ENCODE measurements at regions of chr5 and their contacts with region 1.

Region 1: DNA sequence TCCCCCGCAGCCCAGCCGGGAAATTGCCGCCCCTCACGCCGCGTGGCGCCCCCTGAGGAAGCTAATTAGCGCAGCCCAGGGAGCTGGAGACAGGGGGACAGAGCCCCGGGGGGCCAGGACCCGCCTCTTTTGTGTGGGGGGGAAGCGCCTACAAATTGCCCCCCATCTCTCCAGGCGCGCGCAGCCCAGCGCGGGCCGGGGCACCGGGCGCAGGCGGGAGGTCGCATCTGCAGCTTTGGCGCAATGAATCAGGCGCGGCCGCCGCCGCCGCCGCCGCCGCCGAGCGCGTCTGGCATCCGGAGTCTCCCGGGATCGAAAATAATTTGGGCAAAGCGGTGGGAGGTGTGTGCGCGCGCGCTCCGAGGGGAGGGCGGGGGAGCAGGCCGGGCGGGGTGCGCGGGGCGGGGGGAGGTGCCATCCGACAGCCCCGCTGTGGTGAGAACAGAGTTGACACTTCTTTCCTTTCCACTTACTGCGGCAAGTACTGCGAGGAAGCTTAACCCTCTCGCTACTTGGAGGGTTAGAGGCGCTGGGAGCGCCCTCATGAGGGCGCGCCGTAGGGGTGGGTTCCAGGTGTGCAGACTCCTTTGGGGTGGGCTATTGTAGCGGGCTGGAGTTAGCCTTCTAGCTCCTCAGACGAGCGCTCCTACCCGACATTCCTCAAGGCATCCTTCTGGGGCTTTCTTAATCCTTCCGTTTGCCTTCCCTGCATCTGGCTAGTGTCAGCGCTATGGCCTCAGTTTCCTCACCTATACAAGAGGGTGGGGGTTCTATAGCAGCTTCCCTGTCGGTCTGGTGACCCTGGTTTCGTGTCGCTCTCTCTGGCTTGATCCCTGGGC is 63.1 kb downstream of the CXXC5 start:
- DNase-seq: peak; percentile 79 to 91 (median 86)
- H3K4me3 ChIP-seq: peak overlapping the region; percentile 32 to 82 (median 63)
- H3K27ac ChIP-seq: peak overlapping the region; percentile 61 to 79
- H3K4me1 ChIP-seq: peaks cover 0 to 54% (median 39%) of the 10 kb centered on the region in 4 experiments
- H3K27me3 ChIP-seq: no peaks in the 10 kb centered on the region

Region 2: GRCh38 chr5:139651853-139652787 is 59.2 kb before region 1 on chr5:
- CTCF ChIA-PET with region 1: interaction called, 10 read pairs
- POLR2A ChIA-PET with region 1: interaction called, 7 read pairs
- DNase-seq: peak in 2 of 3 donors; percentile 72 to 78
- H3K4me3 ChIP-seq: peak overlapping the region in 6 of 7 experiments; percentile 27 to 95 (median 49)
- H3K27ac ChIP-seq: peak overlapping the region in 1 of 2 experiments; percentile 65
- H3K4me1 ChIP-seq: peaks cover 15 to 74% (median 71%) of the 10 kb centered on the region in 4 experiments
- H3K27me3 ChIP-seq: no peaks in the 10 kb centered on the region

Region 3: DNA sequence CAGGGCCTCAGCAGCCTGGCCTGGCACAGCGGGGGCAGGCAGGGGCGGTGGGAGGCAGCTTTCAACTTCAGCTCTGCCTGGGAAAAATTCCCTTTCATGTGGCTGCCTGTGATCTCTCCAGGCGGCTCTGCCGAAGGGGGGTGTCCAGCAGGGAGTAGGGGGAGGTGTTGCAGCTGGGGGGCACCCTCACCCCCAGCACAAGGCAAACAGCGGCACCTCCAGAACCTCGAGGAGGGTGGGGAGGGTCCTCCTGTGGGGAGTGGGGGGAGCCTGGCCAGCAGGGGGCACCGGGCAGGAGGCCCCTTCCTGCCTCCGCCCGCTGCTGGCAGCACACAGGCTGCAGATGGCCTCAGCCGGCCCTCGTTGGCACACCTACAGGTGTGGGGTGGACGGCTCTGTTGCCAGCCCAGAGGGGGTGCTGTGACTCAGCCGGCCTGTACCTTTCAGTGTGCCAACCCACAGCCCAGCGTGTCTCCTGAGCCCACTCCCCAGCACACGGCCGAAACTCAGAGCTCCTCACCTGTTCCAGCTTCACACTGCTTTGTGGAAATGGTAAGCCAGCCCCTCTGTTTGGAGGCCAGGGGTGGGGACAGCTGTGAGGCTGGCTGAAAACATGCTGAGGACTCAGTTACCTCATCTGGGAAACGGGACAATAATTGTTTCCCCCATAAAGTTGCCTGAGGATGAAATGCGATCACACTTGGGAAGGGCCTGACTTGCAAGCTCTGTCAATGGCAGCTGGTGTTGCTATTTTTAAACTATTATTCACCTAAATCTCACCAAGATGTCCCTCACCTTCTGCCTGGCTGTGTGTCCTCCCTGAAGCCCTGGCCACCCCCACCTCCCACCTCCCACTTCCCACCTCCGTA is 26.2 kb before region 1 on chr5:
- CTCF ChIA-PET with region 1: interaction called, 67 read pairs
- POLR2A ChIA-PET with region 1: interaction called, 4 read pairs
- DNase-seq: no peak
- H3K4me3 ChIP-seq: no peak overlapping the region
- H3K27ac ChIP-seq: no peak overlapping the region
- H3K4me1 ChIP-seq: peaks cover 2 to 77% (median 64%) of the 10 kb centered on the region in 4 experiments
- H3K27me3 ChIP-seq: no peaks in the 10 kb centered on the region

Region 4: DNA sequence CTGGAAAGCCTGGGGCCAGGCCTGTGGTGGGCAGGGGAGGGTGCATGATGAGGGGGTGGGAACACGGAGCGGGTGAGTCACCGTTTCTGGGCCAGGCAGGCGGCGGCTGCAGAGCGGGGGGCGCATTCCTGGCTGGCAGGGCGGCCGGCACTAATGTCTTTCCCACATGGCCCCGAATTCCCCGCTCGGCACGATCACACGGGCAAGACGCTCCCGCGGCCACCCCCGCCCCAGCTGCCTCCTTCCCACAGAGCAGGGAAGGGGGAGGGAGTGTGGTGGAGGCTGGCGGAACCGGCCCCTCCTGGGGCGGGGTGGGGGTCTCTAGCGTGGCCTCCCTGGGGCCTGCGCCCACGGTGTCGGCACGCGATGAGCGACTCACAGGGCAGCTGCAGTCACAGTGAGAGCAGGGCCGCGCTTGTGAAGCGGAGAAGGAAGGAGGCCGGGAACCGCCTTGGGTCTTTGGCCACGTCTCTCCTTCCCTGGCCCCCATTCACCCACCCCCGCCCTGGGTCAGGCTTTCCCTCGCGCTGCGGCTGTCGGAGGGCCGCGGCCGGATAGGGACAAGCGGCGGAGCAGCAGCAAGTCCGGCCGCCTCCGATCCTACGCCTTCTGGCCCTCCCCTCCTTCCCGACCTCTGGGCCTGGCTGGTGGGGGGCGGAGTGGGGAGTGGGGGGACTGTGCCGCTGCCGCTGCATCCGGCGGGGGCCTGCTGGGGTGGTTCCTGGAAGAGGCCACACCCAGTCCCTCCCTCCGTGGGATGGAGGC is 14.2 kb before region 1 on chr5:
- CTCF ChIA-PET with region 1: interaction called, 67 read pairs
- POLR2A ChIA-PET with region 1: interaction called, 6 read pairs
- DNase-seq: peak; percentile 50 to 85 (median 78)
- H3K4me3 ChIP-seq: peak overlapping the region; percentile 29 to 72 (median 59)
- H3K27ac ChIP-seq: peak overlapping the region; percentile 54 to 80
- H3K4me1 ChIP-seq: peaks cover 0 to 89% (median 55%) of the 10 kb centered on the region in 4 experiments
- H3K27me3 ChIP-seq: no peaks in the 10 kb centered on the region

Region 5: DNA sequence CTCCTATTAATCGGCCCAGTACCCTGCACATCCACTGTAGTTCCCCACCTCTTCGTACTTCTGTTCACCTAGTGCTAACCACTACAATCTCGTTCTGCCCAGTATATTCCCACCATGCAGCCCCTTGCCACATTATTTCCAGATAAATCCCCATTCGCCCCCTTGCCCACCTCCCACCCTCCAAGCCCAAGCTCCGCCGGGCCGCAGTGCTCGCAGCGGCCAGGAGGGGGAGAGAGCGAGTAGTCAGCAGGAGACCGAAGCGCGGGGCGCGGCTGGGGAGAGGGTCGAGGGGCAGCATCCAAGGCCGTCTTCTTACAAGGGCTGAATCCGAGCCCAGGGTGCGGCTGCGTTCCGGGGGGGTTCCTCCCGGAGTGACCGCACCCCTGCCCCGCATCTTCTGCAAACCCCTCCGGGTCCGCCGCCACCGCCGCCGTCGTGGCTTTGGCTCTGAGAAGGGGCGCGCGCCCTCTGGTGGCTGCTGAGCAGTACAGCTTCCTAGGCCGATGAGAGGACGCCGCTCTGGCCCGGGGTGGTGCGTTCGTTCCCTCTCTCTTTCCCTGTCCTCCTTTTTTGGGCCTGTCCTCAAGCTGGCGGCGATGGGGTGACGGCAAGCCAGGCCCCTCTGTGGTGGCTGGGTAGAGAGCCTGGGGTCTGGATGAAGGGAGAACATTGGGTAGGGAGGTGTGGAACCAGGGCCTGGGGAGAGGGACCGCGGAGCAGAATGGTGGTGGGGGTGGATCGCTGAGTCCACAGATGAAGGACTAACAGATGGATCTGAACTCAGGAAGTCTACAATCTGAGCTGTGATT is 54.3 kb after region 1 on chr5:
- CTCF ChIA-PET with region 1: interaction called, 51 read pairs
- POLR2A ChIA-PET with region 1: interaction called, 3 read pairs
- DNase-seq: peak; percentile 72 to 83 (median 83)
- H3K4me3 ChIP-seq: peak overlapping the region; percentile 30 to 78 (median 63)
- H3K27ac ChIP-seq: no peak overlapping the region
- H3K4me1 ChIP-seq: peaks cover 0 to 20% (median 7%) of the 10 kb centered on the region in 4 experiments
- H3K27me3 ChIP-seq: peaks cover 0 to 30% (median 8%) of the 10 kb centered on the region in 5 experiments

Measured in common myeloid progenitor, CD34-positive (primary cell).